Transverse colon (tissue), 4 donors: ENCODE measurements at regions of chrX and their contacts with region 1.

Region 1: GRCh38 chrX:136711147-136711546 is 63.2 kb downstream of the CD40LG start:
- DNase-seq: peak; percentile 39
- H3K4me3 ChIP-seq: no peak overlapping the region
- H3K27ac ChIP-seq: no peak overlapping the region
- H3K4me1 ChIP-seq: peaks cover 0 to 3% (median 0%) of the 10 kb centered on the region in 4 donors
- H3K27me3 ChIP-seq: no peaks in the 10 kb centered on the region
- CTCF ChIP-seq: peak in 4 of 5 experiments; percentile 12 to 27 (median 20)
- EP300 ChIP-seq: no peak
- POLR2A ChIP-seq: no peak

Region 2: DNA sequence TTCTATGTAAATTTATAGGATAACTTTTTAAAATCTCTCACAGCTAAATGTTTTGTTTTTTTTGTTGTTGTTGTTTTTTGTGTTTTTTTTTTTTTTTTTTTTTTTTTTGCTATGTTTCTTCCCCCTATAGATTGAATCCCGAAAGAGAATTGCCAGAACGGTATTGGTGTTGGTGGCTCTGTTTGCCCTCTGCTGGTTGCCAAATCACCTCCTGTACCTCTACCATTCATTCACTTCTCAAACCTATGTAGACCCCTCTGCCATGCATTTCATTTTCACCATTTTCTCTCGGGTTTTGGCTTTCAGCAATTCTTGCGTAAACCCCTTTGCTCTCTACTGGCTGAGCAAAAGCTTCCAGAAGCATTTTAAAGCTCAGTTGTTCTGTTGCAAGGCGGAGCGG is 219.3 kb before region 1 on chrX:
- in situ Hi-C with region 1: no loop called
- intact Hi-C with region 1: loop called (anchors 5 kb)
- DNase-seq: no peak
- H3K4me3 ChIP-seq: no peak overlapping the region
- H3K27ac ChIP-seq: no peak overlapping the region
- H3K4me1 ChIP-seq: peaks cover 0 to 3% (median 0%) of the 10 kb centered on the region in 4 donors
- H3K27me3 ChIP-seq: peaks cover 9% of the 10 kb centered on the region
- CTCF ChIP-seq: no peak
- EP300 ChIP-seq: no peak
- POLR2A ChIP-seq: no peak

Region 3: DNA sequence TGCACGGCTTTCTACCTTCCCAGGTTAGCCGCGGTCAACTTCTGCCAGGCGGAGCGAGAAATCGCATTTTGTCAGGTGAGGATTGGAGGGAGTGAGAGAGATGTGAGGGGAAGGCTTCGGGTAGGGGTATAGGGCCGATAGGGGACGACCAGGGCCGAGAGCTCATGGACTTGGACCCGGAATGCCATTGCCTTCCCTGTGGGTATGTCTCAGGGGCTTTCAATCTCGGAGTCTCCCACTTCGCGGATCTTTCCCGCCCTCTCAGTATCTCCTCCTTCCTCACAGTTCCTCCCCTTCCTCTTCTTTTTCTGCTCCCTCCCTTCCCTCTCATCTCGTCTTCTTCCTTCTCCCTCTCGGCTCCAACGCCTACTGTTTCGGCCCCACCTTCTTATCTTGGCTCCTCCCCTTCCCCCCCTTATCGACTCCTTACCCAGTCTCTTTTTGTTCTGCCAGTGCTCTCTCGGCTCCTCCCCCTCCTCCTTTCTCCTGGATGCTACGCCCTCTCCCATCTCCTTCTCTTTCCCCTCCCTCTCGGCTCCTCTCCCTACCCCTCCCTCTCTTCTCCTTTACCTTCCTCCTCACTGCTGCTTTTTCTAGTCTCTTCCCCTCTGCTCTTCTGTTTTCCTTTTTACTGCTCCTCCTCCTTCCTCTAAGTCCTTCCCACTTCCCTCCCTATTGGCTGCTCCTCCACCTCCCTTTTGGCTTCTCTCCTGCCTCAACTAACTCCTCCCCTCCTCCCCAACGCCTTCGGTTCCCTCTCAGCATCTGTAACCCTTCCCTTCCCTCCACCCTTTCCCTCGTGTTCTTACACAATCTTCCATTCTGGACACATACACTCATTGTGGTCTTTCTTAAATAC is 198.8 kb after region 1 on chrX:
- in situ Hi-C with region 1: loop called in 1 of 4 experiments (anchors 25 kb)
- intact Hi-C with region 1: no loop called
- DNase-seq: peak; percentile 83
- H3K4me3 ChIP-seq: peak overlapping the region; percentile 40 to 77 (median 52)
- H3K27ac ChIP-seq: peak overlapping the region; percentile 79 to 92 (median 90)
- H3K4me1 ChIP-seq: no peaks in the 10 kb centered on the region
- H3K27me3 ChIP-seq: no peaks in the 10 kb centered on the region
- CTCF ChIP-seq: no peak
- EP300 ChIP-seq: no peak
- POLR2A ChIP-seq: peak; percentile 60

Region 4: GRCh38 chrX:136920001-136920400 is 208.9 kb after region 1 on chrX:
- in situ Hi-C with region 1: loop called in 3 of 4 experiments (anchors 10 to 25 kb)
- intact Hi-C with region 1: loop called (anchors 10 kb)
- DNase-seq: no peak
- H3K4me3 ChIP-seq: no peak overlapping the region
- H3K27ac ChIP-seq: no peak overlapping the region
- H3K4me1 ChIP-seq: peaks cover 0 to 2% (median 0%) of the 10 kb centered on the region in 4 donors
- H3K27me3 ChIP-seq: no peaks in the 10 kb centered on the region
- CTCF ChIP-seq: no peak
- EP300 ChIP-seq: no peak
- POLR2A ChIP-seq: no peak

Region 5: GRCh38 chrX:136933611-136934145 is 222.5 kb after region 1 on chrX:
- in situ Hi-C with region 1: loop called in 2 of 4 experiments (anchors 10 to 25 kb)
- intact Hi-C with region 1: loop called (anchors 10 kb)
- DNase-seq: no peak
- H3K4me3 ChIP-seq: no peak overlapping the region
- H3K27ac ChIP-seq: peak overlapping the region in 3 of 4 donors; percentile 15 to 37 (median 16)
- H3K4me1 ChIP-seq: no peaks in the 10 kb centered on the region
- H3K27me3 ChIP-seq: no peaks in the 10 kb centered on the region
- CTCF ChIP-seq: no peak
- EP300 ChIP-seq: no peak
- POLR2A ChIP-seq: no peak